A549 (cell line): ENCODE measurements at regions of chr1 and their contacts with region 1.

Region 1: DNA sequence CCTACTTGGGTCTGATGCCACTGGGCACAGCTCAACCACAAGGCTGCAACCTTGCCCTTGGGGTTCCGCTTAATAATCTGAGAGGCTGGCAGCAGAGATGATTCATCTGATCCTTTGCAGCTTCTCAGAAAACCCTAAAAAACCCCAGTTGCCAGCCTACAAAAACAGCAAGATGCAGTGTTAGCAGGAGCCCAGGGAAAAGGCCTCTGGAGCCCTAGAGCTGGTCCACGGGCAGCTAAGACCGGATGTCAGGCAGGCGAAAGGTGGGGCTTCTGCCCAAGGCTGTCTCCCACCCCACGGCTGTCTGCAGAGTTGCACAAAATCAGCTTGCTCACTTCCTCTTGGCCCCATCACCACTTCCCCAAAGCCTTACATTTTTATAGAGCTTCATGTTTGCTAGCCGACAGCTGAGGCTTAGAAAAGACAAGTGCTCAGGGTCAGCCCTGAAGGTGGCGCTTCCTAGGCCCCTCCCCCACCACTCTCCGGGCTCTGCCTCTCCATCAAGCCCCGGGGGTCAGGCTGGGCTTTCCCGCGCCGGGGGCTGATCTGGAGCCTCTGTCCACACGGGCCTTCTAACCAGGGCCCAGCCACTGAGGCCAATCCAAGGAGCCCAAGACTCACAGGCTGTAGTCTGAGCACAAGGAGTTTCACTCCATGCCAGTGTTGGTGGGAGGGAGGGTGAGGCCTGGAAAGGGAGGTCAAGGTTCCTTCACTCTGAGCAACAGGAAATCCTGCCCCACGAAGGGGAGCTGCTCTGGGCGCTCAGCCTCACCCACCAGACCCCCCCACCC is 4.2 kb upstream of the ADORA3 start:
- DNase-seq: peak in 1 of 2 experiments; percentile 15
- ATAC-seq: peak; percentile 86 to 89
- H3K4me3 ChIP-seq: peak overlapping the region; percentile 20; the same call in 1 of the 3 replicates
- H3K27ac ChIP-seq: peak overlapping the region; percentile 81 to 90
- H3K4me1 ChIP-seq: peaks cover 8% of the 10 kb centered on the region
- CTCF ChIP-seq: no peak
- EP300 ChIP-seq: no peak
- POLR2A ChIP-seq: no peak
- RAD21 ChIP-seq: no peak

Region 2: DNA sequence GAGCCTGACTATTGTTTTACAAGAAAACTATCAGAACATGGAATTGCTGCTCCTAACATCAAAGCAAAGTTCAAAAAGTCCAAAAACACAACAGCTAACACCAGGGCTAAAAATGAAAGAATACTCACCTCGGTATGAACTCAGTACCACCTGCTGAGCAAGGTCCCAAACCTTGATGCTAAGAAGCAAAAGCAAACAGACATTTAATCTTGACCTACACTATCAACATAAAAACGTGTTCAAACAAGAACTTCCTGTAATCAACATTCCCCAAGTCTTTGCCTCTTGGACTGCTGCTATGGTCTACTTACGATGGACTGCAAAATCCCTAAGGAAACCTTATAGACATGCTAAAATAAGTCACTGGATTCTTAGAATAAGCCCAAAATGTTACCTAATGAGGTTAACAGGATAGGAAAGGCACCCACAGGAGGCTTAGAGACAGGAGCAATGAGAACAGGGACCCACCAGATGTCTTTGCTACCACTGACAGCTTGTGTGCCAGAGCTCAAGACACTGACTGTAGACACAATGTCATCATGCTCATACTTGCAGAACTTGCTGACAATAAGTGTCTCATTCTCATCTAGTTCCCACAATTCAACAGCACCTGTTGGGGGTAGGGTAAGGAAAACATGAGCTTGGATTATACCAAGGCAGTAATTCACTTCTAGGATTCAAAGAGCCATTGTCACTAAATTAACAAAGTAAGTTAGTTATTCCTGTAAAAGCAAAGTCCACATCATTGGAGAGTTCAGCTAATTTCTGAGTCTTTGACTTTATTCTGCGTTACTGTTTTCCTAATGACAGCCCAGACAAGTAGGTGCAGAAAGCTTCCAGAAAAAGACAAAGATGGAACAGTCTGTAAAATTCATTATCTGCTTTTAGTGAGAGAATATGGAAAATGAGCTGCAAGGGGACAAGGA is 60.4 kb before region 1 on chr1:
- CTCF ChIA-PET with region 1: no interaction called
- POLR2A ChIA-PET with region 1: no interaction called
- DNase-seq: no peak
- ATAC-seq: no peak
- H3K4me3 ChIP-seq: peak overlapping the region; percentile 88
- H3K27ac ChIP-seq: no peak overlapping the region
- H3K4me1 ChIP-seq: peaks cover 23% of the 10 kb centered on the region
- CTCF ChIP-seq: no peak
- EP300 ChIP-seq: no peak
- POLR2A ChIP-seq: no peak
- RAD21 ChIP-seq: no peak

Region 3: GRCh38 chr1:111489604-111490003 is 18.0 kb before region 1 on chr1:
- CTCF ChIA-PET with region 1: interaction called, 54 read pairs
- POLR2A ChIA-PET with region 1: no interaction called
- DNase-seq: no peak
- ATAC-seq: no peak
- H3K4me3 ChIP-seq: no peak overlapping the region
- H3K27ac ChIP-seq: no peak overlapping the region
- H3K4me1 ChIP-seq: no peaks in the 10 kb centered on the region
- CTCF ChIP-seq: no peak
- EP300 ChIP-seq: no peak
- POLR2A ChIP-seq: no peak
- RAD21 ChIP-seq: no peak

Region 4: GRCh38 chr1:111587509-111588174 is 80.0 kb after region 1 on chr1:
- CTCF ChIA-PET with region 1: no interaction called
- POLR2A ChIA-PET with region 1: no interaction called
- DNase-seq: no peak
- ATAC-seq: no peak
- H3K4me3 ChIP-seq: no peak overlapping the region
- H3K27ac ChIP-seq: no peak overlapping the region
- H3K4me1 ChIP-seq: peaks cover 5% of the 10 kb centered on the region; the same call in 2 of the 3 replicates
- CTCF ChIP-seq: no peak
- EP300 ChIP-seq: no peak
- POLR2A ChIP-seq: no peak
- RAD21 ChIP-seq: no peak

Region 5: DNA sequence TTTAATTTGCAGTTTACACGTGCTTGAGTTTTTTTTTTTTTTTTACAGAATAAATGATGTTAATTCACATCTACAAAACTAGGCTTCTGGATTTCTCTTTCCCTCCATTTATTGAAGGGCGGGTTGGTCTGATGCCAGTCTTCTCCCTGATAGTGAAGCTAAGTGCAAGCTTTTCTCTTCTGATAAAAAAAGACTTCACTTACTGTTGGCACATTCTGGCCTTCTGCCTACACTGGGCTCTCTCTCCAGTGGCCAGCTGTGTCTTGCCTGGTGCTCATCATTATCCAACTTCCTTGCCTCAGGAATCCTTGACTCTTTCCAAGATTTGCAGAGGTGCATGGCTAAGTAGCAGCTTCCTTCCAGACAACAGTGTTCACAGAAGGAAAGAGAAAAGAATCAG is 104.4 kb after region 1 on chr1:
- CTCF ChIA-PET with region 1: interaction called, 11 read pairs
- POLR2A ChIA-PET with region 1: no interaction called
- DNase-seq: no peak
- ATAC-seq: no peak
- H3K4me3 ChIP-seq: no peak overlapping the region
- H3K27ac ChIP-seq: no peak overlapping the region
- H3K4me1 ChIP-seq: no peaks in the 10 kb centered on the region
- CTCF ChIP-seq: no peak
- EP300 ChIP-seq: no peak
- POLR2A ChIP-seq: no peak
- RAD21 ChIP-seq: no peak

Region 6: DNA sequence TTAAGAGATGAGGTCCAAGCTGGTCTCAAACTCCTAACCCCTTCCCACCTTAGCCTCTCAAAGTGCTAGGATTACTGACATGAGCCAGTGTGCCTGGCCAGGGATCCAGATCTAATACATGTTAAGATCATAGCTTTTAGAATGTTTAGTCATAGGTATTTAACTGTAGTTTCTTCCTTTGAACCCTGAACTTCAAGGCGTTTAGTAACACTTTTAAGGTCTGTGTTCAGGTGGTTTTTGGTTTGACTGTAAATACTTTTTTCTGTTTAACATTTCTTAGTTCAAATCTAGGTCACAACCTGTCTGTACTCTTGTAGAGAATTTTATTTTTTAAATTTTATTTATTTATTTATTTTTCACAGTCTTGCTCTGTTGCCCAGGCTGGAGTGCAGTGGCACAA is 140.1 kb after region 1 on chr1:
- CTCF ChIA-PET with region 1: interaction called, 18 read pairs
- POLR2A ChIA-PET with region 1: no interaction called
- DNase-seq: no peak
- ATAC-seq: no peak
- H3K4me3 ChIP-seq: no peak overlapping the region
- H3K27ac ChIP-seq: no peak overlapping the region
- H3K4me1 ChIP-seq: no peaks in the 10 kb centered on the region
- CTCF ChIP-seq: no peak
- EP300 ChIP-seq: no peak
- POLR2A ChIP-seq: no peak
- RAD21 ChIP-seq: no peak

Region 7: GRCh38 chr1:111660204-111661150 is 152.9 kb after region 1 on chr1:
- CTCF ChIA-PET with region 1: interaction called, 24 read pairs
- POLR2A ChIA-PET with region 1: no interaction called
- DNase-seq: no peak
- ATAC-seq: no peak
- H3K4me3 ChIP-seq: no peak overlapping the region
- H3K27ac ChIP-seq: no peak overlapping the region
- H3K4me1 ChIP-seq: peaks cover 8% of the 10 kb centered on the region; the same call in 2 of the 3 replicates
- CTCF ChIP-seq: no peak
- EP300 ChIP-seq: no peak
- POLR2A ChIP-seq: no peak
- RAD21 ChIP-seq: no peak